Naive thymus-derived CD4-positive, alpha-beta T cell (primary cell): ENCODE measurements at regions of chr4 and their contacts with region 1.

Region 1: DNA sequence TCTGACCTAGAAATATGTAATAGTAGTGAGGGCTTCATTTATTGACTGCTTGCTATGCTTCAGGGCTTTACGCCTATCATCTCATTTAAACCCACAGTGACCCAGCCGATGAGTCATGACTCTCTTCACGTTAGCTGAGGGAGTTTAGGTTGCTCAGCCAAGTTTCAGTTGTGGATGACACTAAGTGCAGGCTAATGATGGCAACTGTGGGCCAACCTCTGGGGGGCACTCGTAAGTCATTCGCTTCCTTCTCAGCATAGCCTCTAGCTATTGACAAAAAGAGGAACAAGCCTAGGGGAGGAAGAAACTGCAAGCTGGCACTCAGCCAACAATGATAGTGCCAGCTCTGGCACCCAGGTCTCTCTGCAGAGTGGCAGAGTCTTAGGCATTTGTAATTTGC is 325.0 kb downstream of the ARHGAP10 start:
- DNase-seq: peak in 6 of 9 donors; percentile 22 to 40 (median 28)
- ATAC-seq: peak; percentile 80
- H3K4me3 ChIP-seq: no peak overlapping the region
- H3K4me3 Mint-ChIP-seq: peak overlapping the region in 9 of 10 donors; percentile 10 to 64 (median 29)
- H3K27ac ChIP-seq: no peak overlapping the region
- H3K27ac Mint-ChIP-seq: peak overlapping the region; percentile 48 to 99 (median 84)
- H3K4me1 ChIP-seq: peaks cover 58 to 64% of the 10 kb centered on the region in 2 donors
- H3K4me1 Mint-ChIP-seq: peaks cover 59 to 98% (median 94%) of the 10 kb centered on the region in 7 donors
- H3K27me3 ChIP-seq: no peaks in the 10 kb centered on the region
- H3K27me3 Mint-ChIP-seq: no peaks in the 10 kb centered on the region

Region 2: DNA sequence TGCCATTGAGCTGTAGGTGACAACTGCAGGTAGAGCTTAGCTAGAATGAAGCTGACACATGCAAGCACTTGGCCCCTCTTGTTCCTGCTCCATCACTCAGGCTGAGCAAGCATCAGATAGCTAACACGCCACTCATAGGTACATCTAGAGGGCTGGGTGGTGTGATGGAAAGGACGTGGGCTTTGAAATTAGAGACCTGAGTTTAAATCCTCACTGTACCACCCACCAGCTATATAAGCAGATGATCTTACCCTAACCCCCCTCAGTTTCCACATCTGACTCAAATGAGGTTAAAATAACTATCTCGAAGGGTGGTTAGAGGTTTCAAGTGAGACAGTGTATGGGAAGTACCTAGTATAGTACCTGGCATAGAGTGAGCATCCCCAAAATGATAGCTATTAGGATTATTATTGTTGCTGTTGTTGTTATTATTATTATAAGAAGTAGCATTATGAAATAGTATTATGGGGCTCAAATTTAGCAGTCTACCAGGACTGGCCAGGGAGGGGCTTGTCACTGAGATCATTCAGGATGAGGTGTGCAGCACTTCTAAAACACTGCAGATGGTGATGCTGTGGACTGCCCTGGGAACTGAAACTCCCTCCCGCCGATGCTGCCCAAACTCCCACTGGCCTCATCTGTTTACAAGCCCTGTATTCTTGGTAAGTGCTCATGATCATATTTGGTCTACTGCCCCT is 1783.5 kb before region 1 on chr4:
- CTCF ChIA-PET with region 1: no interaction called
- POLR2A ChIA-PET with region 1: no interaction called
- intact Hi-C with region 1: no loop called
- DNase-seq: no peak
- ATAC-seq: no peak
- H3K4me3 ChIP-seq: no peak overlapping the region
- H3K4me3 Mint-ChIP-seq: no peak overlapping the region
- H3K27ac ChIP-seq: no peak overlapping the region
- H3K27ac Mint-ChIP-seq: no peak overlapping the region
- H3K4me1 ChIP-seq: no peaks in the 10 kb centered on the region
- H3K4me1 Mint-ChIP-seq: peaks cover 0 to 6% (median 0%) of the 10 kb centered on the region in 7 donors
- H3K27me3 ChIP-seq: no peaks in the 10 kb centered on the region
- H3K27me3 Mint-ChIP-seq: no peaks in the 10 kb centered on the region

Region 3: GRCh38 chr4:147586637-147587036 is 470.2 kb before region 1 on chr4:
- CTCF ChIA-PET with region 1: no interaction called
- POLR2A ChIA-PET with region 1: no interaction called
- intact Hi-C with region 1: no loop called
- DNase-seq: no peak
- ATAC-seq: no peak
- H3K4me3 ChIP-seq: no peak overlapping the region
- H3K4me3 Mint-ChIP-seq: no peak overlapping the region
- H3K27ac ChIP-seq: no peak overlapping the region
- H3K27ac Mint-ChIP-seq: no peak overlapping the region
- H3K4me1 ChIP-seq: no peaks in the 10 kb centered on the region
- H3K4me1 Mint-ChIP-seq: peaks cover 0 to 4% (median 0%) of the 10 kb centered on the region in 7 donors
- H3K27me3 ChIP-seq: no peaks in the 10 kb centered on the region
- H3K27me3 Mint-ChIP-seq: peaks cover 9 to 16% (median 15%) of the 10 kb centered on the region in 5 donors

Region 4: DNA sequence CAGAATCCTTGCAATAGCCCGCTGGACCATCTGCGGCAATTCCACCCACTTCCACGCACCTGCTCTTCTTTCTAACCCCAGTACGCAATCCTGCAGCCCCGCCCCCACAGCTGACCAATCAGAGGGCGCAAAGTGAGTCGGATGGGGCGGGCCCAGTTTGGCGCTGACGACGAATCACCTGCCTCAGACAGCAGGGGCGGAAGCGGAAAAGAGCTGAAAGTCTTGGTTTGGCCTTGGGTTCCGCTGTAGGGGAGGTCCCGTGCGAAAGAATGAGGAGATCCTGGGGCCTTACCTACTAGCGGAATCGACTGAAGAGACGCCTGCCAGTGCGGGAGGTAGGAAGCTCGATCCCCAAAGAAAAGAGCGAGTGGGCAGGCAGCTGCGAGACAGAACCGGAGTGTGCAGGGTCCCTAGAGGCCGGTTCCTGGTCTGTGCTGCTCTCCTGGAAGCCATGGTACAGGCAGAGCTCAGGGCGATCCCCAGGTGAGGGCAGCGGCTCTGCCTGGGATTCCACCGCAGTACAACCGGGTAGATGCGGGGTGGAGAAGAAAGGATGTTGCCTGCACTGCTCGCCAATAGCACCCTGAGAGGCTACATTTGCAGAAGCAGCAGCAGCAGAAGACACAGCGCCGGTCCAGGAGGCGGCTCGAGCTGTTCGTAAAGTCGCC is 439.6 kb before region 1 on chr4 and contains the start of gene TMEM184C:
- CTCF ChIA-PET with region 1: no interaction called
- POLR2A ChIA-PET with region 1: no interaction called
- intact Hi-C with region 1: loop called in 1 of 2 experiments (anchors 5 kb)
- DNase-seq: peak; percentile 97 to 99 (median 98)
- ATAC-seq: peak; percentile 97
- H3K4me3 ChIP-seq: peak within 1 kb of the TSS; percentile 89
- H3K4me3 Mint-ChIP-seq: peak within 1 kb of the TSS; percentile 86 to 98 (median 94)
- H3K27ac ChIP-seq: peak within 1 kb of the TSS; percentile 87
- H3K27ac Mint-ChIP-seq: peak within 1 kb of the TSS; percentile 92 to 99 (median 95)
- H3K4me1 ChIP-seq: peaks cover 21 to 30% of the 10 kb centered on the region in 2 donors
- H3K4me1 Mint-ChIP-seq: peaks cover 21 to 48% (median 33%) of the 10 kb centered on the region in 7 donors
- H3K27me3 ChIP-seq: no peaks in the 10 kb centered on the region
- H3K27me3 Mint-ChIP-seq: peaks cover 0 to 22% (median 4%) of the 10 kb centered on the region in 5 donors
- total RNA-seq, gene TMEM184C: 13.7 to 27.4 (median 19.0) TPM

Region 5: DNA sequence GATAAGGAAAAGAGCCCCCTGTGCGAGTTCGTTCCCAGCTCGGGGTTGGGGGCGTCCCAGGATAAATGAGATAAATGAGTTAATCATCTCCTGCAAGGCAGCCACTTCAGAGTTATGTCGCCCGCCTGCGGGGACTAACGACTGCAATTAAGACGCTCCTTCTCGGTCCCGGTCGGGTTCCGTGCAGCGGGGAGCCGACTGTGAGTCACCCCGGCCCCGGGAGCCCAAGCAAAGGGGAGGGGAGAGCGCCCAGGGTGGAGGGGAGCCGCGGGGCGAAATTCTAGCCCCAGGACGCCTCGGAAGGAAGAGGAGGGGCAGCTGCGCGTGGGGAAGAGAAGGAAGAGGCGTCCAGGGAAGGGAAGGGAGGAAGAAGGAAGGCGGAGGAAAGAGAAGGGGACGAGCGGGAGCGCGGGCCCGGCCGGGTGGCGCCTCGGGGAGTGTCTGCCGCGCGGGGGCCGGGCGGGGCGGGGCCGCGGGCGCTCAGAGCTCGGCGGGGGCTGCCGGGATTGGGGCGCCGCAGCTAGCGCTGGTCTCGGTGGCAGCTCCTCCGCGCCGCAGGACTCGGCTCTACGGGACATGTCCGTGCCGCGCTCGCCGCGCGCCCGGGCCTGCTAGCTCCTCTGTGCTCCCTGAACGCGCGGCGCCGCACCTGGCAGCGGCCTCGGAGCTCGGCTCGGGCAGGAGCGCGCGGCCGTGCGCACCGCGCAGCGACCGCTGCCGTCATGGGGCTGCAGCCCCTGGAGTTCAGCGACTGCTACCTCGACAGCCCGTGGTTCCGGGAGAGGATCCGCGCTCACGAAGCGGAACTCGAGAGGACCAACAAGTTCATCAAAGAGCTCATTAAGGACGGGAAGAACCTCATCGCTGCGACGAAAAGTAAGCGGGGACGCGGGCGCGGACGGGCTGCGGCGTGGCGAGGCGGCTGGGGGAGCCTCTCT is 325.0 kb before region 1 on chr4 and contains the start of gene ARHGAP10:
- CTCF ChIA-PET with region 1: no interaction called
- POLR2A ChIA-PET with region 1: no interaction called
- intact Hi-C with region 1: loop called in 1 of 2 experiments (anchors 10 kb)
- DNase-seq: peak; percentile 34 to 74 (median 54)
- ATAC-seq: peak; percentile 79
- H3K4me3 ChIP-seq: peak within 1 kb of the TSS; percentile 76
- H3K4me3 Mint-ChIP-seq: peak within 1 kb of the TSS; percentile 89 to 97 (median 92)
- H3K27ac ChIP-seq: peak within 1 kb of the TSS; percentile 63
- H3K27ac Mint-ChIP-seq: peak within 1 kb of the TSS; percentile 75 to 93 (median 88)
- H3K4me1 ChIP-seq: peaks cover 14 to 15% of the 10 kb centered on the region in 2 donors
- H3K4me1 Mint-ChIP-seq: peaks cover 13 to 42% (median 24%) of the 10 kb centered on the region in 7 donors
- H3K27me3 ChIP-seq: no peaks in the 10 kb centered on the region
- H3K27me3 Mint-ChIP-seq: peaks cover 0 to 41% (median 0%) of the 10 kb centered on the region in 5 donors
- total RNA-seq, gene ARHGAP10: 2.9 to 8.5 (median 3.2) TPM

Region 6: GRCh38 chr4:148025981-148026380 is 30.9 kb before region 1 on chr4:
- CTCF ChIA-PET with region 1: interaction called, 6 read pairs
- POLR2A ChIA-PET with region 1: interaction called, 5 read pairs
- intact Hi-C with region 1: loop called in 1 of 2 experiments (anchors 1 kb)
- DNase-seq: no peak
- ATAC-seq: no peak
- H3K4me3 ChIP-seq: no peak overlapping the region
- H3K4me3 Mint-ChIP-seq: no peak overlapping the region
- H3K27ac ChIP-seq: no peak overlapping the region
- H3K27ac Mint-ChIP-seq: peak overlapping the region in 3 of 9 donors; percentile 1 to 73 (median 38)
- H3K4me1 ChIP-seq: no peaks in the 10 kb centered on the region
- H3K4me1 Mint-ChIP-seq: peaks cover 0 to 6% (median 0%) of the 10 kb centered on the region in 7 donors
- H3K27me3 ChIP-seq: no peaks in the 10 kb centered on the region
- H3K27me3 Mint-ChIP-seq: no peaks in the 10 kb centered on the region

Region 7: DNA sequence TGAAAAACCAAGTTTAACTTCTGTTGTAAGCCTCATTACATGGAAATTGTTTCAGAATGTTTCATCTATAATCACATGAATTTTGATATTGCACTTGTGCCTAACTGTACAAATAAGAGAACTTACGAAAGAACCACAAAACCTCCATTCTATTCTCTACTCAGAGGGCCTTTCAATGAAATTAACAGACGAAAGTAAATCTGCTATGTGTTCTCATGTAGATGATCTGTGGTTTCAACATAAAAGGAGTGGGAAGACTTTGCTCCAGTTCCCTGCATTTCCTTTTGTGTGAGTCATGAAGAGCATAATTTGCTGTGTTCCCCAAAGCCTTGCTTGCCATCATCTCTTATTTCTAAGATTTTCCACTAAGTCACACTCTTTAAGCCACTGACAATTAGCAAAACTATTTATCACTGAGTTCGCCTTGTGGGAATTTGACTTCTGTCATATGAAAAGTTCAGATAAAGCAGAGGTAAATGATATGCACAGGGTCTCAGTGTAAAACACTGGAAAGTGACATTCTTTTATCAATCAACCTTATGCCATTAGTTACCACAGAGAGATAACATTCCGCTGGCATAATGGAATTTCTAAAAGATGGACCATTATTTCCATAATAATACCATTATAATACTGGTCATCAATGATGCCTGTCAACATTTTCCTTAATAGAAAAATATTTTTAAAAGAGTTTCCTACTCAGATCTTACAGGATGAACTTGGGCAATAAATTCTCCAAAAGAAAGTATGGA is 55.5 kb after region 1 on chr4:
- CTCF ChIA-PET with region 1: no interaction called
- POLR2A ChIA-PET with region 1: interaction called, 6 read pairs
- intact Hi-C with region 1: loop called in 1 of 2 experiments (anchors 5 kb)
- DNase-seq: peak in 2 of 9 donors; percentile 8 to 13
- ATAC-seq: no peak
- H3K4me3 ChIP-seq: no peak overlapping the region
- H3K4me3 Mint-ChIP-seq: peak overlapping the region in 5 of 10 donors; percentile 16 to 57 (median 36)
- H3K27ac ChIP-seq: no peak overlapping the region
- H3K27ac Mint-ChIP-seq: peak overlapping the region in 6 of 9 donors; percentile 38 to 82 (median 65)
- H3K4me1 ChIP-seq: peaks cover 0 to 13% of the 10 kb centered on the region in 2 donors
- H3K4me1 Mint-ChIP-seq: peaks cover 4 to 57% (median 48%) of the 10 kb centered on the region in 7 donors
- H3K27me3 ChIP-seq: no peaks in the 10 kb centered on the region
- H3K27me3 Mint-ChIP-seq: no peaks in the 10 kb centered on the region

Region 8: DNA sequence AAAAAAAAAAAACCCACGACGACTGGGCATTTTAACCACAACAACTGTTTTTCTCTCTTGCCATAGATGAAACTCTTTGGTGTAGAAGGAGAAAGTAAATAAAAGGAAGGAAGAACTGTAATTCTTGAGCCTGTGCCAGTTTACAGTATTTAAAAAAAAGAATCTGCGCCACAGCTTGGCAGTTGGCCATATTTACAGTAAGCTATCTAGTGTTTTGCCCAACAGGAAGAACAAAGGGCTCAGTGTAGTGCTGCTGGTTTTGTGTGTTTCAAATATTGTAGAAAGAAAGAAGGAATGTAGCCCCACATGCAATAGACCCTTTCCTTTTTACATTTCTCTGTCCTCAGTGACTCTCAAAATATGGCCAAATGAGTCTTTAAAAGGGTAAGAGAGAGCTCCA is 319.3 kb after region 1 on chr4:
- CTCF ChIA-PET with region 1: no interaction called
- POLR2A ChIA-PET with region 1: interaction called, 3 read pairs
- intact Hi-C with region 1: loop called in 1 of 2 experiments (anchors 5 kb)
- DNase-seq: peak in 7 of 9 donors; percentile 64 to 84 (median 76)
- ATAC-seq: peak; percentile 86
- H3K4me3 ChIP-seq: peak overlapping the region; percentile 37
- H3K4me3 Mint-ChIP-seq: peak overlapping the region in 9 of 10 donors; percentile 67 to 88 (median 82)
- H3K27ac ChIP-seq: peak overlapping the region; percentile 59
- H3K27ac Mint-ChIP-seq: peak overlapping the region in 8 of 9 donors; percentile 88 to 99 (median 92)
- H3K4me1 ChIP-seq: peaks cover 0 to 8% of the 10 kb centered on the region in 2 donors
- H3K4me1 Mint-ChIP-seq: peaks cover 6 to 61% (median 44%) of the 10 kb centered on the region in 7 donors
- H3K27me3 ChIP-seq: no peaks in the 10 kb centered on the region
- H3K27me3 Mint-ChIP-seq: no peaks in the 10 kb centered on the region